HCT116 (cell line): ENCODE measurements at regions of chr11 and their contacts with region 1.

Region 1: GRCh38 chr11:44229624-44230023 is 80.3 kb downstream of the ALX4 start:
- DNase-seq: no peak
- ATAC-seq: no peak
- H3K4me3 ChIP-seq: no peak overlapping the region
- H3K27ac ChIP-seq: no peak overlapping the region
- H3K4me1 ChIP-seq: no peaks in the 10 kb centered on the region
- H3K27me3 ChIP-seq: no peaks in the 10 kb centered on the region
- CTCF ChIP-seq: no peak
- POLR2A ChIP-seq: no peak
- RAD21 ChIP-seq: no peak

Region 2: DNA sequence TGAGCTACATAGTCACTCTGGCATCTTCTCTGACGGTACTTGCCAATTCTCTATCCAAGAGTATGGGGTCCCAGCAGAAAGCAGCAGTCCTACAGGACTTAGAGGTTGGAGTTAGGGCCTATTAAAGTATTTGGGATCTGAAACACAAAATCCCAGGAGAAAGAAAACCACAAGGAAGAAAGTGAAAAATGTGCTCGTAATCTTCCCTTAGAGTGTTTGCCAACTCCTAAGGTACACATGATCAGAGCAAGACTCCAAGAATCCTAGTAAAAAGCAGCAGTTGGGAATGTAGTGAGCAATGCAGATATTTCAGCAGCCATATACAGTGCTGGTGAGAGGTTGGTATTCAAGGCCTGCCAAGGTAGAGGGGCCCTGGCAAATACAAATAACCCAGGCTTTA is 62.6 kb before region 1 on chr11:
- CTCF ChIA-PET with region 1: no interaction called
- POLR2A ChIA-PET with region 1: no interaction called
- RAD21 ChIA-PET with region 1: no interaction called
- intact Hi-C with region 1: loop called (anchors 5 kb)
- DNase-seq: no peak
- ATAC-seq: no peak
- H3K4me3 ChIP-seq: no peak overlapping the region
- H3K27ac ChIP-seq: no peak overlapping the region
- H3K4me1 ChIP-seq: no peaks in the 10 kb centered on the region
- H3K27me3 ChIP-seq: no peaks in the 10 kb centered on the region
- CTCF ChIP-seq: no peak
- POLR2A ChIP-seq: no peak
- RAD21 ChIP-seq: no peak

Region 3: DNA sequence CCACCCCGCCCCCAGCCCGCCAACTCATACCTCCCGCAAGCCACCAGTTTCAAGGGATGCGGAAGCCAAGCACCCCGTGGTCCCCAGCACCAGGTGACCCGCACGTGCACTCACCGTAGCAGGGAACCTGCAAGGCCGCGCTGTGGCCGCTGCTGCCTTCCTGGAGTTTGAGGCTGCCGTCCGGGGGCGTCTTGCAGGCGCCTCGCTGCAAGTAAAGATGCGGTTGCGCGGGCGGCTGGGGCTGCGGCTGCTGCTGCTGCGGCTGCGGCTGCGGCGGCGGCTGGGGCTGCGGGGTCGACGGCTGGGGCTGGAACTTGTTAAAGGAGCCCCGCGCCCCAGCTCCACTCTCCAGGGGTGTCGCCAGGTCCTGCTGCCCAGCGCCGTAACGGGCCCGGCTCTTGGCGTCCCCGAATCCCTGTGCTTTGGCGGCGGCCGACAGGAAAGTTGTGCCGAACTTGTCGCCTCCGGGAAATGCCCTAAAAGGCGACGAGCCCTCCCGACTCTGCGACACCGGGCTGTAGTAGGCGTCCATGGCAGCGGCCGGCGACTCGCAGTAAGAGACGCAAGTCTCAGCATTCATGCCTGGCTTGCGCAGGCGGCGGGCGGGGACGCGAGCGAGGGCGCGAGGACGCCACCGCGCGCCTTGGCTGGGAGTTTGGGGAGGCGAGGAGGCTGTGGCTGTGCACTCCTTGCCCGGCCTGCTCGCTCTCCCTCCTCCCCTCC is 80.0 kb after region 1 on chr11 and contains the start of gene ALX4:
- CTCF ChIA-PET with region 1: no interaction called
- POLR2A ChIA-PET with region 1: no interaction called
- RAD21 ChIA-PET with region 1: no interaction called
- intact Hi-C with region 1: no loop called
- DNase-seq: no peak
- ATAC-seq: no peak
- H3K4me3 ChIP-seq: no peak within 1 kb of the TSS
- H3K27ac ChIP-seq: no peak within 1 kb of the TSS
- H3K4me1 ChIP-seq: no peaks in the 10 kb centered on the region
- H3K27me3 ChIP-seq: peaks cover 14% of the 10 kb centered on the region; the same call in 1 of the 2 replicates
- CTCF ChIP-seq: no peak
- POLR2A ChIP-seq: no peak
- RAD21 ChIP-seq: no peak
- total RNA-seq, gene ALX4: not detected

Region 4: DNA sequence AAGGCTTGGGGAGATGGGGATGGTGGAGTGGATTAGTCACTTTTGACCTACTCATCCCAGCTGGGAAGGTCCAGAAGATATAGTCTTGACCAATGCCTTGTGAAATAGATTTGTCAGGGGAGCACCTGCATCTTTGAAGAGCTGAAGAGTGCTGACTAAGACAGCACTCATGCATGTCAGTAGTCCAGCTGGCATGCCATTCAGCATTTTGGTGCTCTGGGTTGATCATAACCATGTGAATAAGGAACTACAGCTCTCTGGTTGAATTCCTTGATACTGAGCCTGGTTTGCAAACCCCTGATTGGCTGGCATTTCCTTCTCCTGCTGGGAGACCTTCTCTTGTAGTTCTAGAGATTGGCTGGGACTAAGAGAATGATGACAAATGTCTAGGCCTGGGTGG is 187.2 kb after region 1 on chr11:
- CTCF ChIA-PET with region 1: no interaction called
- POLR2A ChIA-PET with region 1: no interaction called
- RAD21 ChIA-PET with region 1: no interaction called
- intact Hi-C with region 1: no loop called
- DNase-seq: no peak
- ATAC-seq: no peak
- H3K4me3 ChIP-seq: no peak overlapping the region
- H3K27ac ChIP-seq: no peak overlapping the region
- H3K4me1 ChIP-seq: 0 out of 4 replicates have a peak, but pooled peaks cover 0 to 3% of the 10 kb centered on the region in 2 experiments
- H3K27me3 ChIP-seq: peaks cover 42% of the 10 kb centered on the region; the same call in 1 of the 2 replicates
- CTCF ChIP-seq: no peak
- POLR2A ChIP-seq: no peak
- RAD21 ChIP-seq: no peak